Activated CD8-positive, alpha-beta T cell treated with anti-CD3 and anti-CD28 coated beads for 36 hours (primary cell): ENCODE measurements at regions of chr16 and their contacts with region 1.

Region 1: DNA sequence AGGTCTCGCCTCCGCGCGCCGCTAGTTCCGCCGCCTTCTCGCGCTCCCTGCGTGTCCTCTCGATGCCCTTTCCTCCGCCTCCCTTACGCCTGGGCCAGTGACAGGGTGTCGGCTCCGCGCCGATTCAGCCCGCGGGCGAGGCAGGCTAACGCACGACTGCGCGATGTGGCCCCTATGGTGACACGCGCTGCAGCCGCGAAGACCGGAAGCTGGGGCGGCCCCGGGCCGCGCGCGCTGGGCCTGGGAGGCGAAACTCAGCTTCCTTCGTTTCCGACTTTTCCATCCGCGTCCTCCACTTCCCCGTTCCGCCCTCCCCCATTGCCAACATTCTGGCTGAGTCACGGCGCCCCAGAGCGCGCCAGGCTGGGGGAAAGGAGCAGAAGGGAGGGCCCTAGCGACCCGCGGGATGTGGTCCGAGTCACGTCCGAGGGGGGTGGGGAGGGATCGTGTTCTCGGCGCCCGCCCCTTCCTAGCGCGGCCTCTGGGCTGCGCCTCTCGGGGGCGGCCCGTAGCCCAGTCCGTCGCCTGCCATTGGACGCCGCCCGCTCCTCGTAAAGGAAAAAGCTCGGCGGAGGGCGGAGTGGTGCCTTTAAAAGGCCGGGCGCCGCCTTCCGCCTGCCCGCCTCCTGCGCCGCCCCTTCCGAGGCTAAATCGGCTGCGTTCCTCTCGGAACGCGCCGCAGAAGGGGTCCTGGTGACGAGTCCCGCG is at the start of gene ALDOA:
- DNase-seq: peak; percentile 99
- ATAC-seq: peak; percentile 87
- H3K4me3 Mint-ChIP-seq: peak within 1 kb of the TSS; percentile 91
- H3K27ac Mint-ChIP-seq: peak within 1 kb of the TSS; percentile 100
- H3K4me1 Mint-ChIP-seq: peaks cover 30% of the 10 kb centered on the region
- H3K27me3 Mint-ChIP-seq: no peaks in the 10 kb centered on the region
- CTCF ChIP-seq: no peak
- total RNA-seq, gene ALDOA: 3,042 to 3,081 TPM

Region 2: DNA sequence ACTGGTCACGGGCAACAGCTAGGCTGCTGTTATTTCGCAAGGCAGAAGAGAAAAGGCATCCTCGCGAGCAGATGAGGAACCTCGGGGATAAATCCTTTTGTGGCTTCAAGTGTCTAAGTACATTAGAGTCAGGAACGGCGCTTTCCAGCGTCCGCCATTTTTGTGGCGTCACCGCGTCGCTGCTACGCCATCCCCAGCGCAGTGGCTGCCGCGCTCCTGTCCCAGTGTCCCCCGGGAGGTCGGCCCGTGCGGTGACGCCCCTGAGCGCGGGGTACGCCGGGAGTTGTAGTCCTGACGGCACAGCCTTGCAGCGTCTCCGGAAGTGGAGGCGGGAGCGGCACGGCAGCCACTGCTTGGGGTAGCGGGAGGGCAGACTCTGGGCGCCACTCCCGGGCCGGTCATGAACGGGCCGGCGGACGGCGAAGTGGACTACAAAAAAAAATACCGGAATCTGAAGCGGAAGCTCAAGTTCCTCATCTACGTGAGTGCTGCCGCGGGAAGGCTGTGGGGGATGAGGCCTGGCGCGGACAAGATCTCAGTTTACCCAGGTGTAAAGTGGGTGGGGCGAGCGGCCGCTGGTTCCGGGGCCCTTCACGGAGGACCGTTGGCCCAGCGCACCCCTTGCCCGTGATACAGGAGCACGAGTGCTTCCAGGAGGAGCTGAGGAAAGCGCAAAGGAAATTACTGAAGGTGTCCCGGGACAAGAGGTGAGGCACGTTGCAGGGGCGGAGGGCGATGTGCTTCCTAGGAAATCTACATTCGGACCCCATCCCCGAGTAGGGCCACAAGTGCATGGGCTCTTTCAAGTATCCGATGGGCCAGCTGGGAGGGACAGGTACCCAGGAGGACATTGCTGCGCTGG is 69.2 kb before region 1 on chr16 and contains the start of gene INO80E:
- CTCF ChIA-PET with region 1: no interaction called
- POLR2A ChIA-PET with region 1: interaction called, 14 read pairs
- intact Hi-C with region 1: no loop called
- DNase-seq: peak; percentile 99
- ATAC-seq: peak; percentile 97
- H3K4me3 Mint-ChIP-seq: peak within 1 kb of the TSS; percentile 96
- H3K27ac Mint-ChIP-seq: peak within 1 kb of the TSS; percentile 99
- H3K4me1 Mint-ChIP-seq: peaks cover 29% of the 10 kb centered on the region
- H3K27me3 Mint-ChIP-seq: no peaks in the 10 kb centered on the region
- CTCF ChIP-seq: no peak
- total RNA-seq, gene INO80E: 75.9 to 79.1 TPM

Region 3: DNA sequence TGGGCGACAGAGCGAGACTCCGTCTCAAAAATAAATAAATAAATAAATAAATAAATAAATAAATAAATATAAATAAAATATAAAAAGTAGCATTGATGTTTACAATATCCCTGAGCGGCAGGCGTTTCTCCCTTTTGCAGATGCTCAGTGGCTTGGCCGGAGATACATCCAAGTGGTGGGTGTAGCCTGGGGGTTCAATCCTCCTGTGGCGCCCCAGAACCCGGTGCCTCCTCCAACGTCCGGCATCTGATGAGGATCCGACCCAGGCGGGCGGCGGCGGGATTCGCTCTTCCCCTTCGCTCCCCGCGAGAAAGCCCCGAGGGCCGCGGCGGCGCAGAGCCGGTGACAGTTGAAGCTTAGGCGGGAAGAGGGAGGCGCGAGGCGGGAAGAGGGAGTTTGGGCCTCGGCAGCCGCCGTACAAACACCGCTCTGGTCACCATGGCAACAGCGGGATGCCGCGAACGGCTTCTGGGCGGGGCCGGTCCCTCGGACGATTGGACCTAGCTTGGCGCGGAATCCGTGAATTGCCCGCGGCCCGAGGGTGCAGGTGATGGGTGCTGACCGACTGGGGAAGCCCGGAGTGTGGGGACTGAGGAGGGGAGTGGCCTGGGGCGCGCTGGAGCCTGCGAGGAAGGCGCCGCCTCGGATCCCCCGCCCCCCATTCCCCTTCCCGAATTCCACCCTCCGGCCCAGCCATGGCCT is 12.5 kb before region 1 on chr16:
- CTCF ChIA-PET with region 1: interaction called, 14 read pairs
- POLR2A ChIA-PET with region 1: interaction called, 44 read pairs
- intact Hi-C with region 1: no loop called
- DNase-seq: peak; percentile 94
- ATAC-seq: peak; percentile 82
- H3K4me3 Mint-ChIP-seq: peak overlapping the region; percentile 80
- H3K27ac Mint-ChIP-seq: peak overlapping the region; percentile 57
- H3K4me1 Mint-ChIP-seq: peaks cover 16% of the 10 kb centered on the region
- H3K27me3 Mint-ChIP-seq: peaks cover 2% of the 10 kb centered on the region
- CTCF ChIP-seq: no peak

Region 4: DNA sequence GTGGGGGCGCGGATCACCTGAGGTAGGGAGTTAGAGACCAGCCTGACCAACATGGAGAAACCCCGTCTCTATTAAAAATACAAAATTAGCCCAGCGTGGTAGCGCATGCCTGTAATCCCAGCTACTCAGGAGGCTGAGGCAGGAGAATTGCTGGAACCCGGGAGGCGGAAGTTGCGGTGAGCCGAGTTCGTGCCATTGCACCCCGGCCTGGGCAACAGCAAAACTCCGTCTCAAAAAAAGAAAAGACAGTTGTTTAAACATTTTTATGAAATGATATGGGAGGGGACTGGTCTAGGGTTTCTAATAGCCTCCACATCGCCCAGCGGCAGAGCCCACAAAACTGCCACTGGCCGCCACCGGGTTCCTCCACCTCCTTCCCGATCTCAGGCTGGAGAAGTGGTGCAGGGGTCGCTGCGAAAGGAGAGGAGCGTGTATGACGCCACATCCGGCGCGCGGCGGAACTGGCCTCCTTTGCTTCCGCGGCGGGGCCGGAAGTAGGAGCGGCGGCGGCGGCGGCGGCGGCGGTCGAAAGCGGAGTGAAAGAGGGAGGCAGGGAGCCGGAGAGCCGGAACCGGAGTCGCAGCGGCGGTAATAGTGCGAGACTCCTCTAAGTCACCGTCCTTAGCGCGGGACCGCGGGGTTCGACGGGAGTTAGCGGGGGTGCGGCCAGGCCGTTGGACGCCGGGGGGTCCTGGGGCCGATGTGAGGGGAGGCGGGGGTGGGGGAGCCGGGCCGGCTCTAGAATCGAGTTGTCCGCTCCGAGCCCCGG is 10.4 kb after region 1 on chr16 and contains the start of gene PPP4C:
- CTCF ChIA-PET with region 1: interaction called, 5 read pairs
- POLR2A ChIA-PET with region 1: interaction called, 83 read pairs
- intact Hi-C with region 1: no loop called
- DNase-seq: peak; percentile 95
- ATAC-seq: peak; percentile 88
- H3K4me3 Mint-ChIP-seq: peak within 1 kb of the TSS; percentile 92
- H3K27ac Mint-ChIP-seq: peak within 1 kb of the TSS; percentile 94
- H3K4me1 Mint-ChIP-seq: peaks cover 35% of the 10 kb centered on the region
- H3K27me3 Mint-ChIP-seq: no peaks in the 10 kb centered on the region
- CTCF ChIP-seq: no peak
- total RNA-seq, gene PPP4C: 116 to 121 TPM

Region 5: DNA sequence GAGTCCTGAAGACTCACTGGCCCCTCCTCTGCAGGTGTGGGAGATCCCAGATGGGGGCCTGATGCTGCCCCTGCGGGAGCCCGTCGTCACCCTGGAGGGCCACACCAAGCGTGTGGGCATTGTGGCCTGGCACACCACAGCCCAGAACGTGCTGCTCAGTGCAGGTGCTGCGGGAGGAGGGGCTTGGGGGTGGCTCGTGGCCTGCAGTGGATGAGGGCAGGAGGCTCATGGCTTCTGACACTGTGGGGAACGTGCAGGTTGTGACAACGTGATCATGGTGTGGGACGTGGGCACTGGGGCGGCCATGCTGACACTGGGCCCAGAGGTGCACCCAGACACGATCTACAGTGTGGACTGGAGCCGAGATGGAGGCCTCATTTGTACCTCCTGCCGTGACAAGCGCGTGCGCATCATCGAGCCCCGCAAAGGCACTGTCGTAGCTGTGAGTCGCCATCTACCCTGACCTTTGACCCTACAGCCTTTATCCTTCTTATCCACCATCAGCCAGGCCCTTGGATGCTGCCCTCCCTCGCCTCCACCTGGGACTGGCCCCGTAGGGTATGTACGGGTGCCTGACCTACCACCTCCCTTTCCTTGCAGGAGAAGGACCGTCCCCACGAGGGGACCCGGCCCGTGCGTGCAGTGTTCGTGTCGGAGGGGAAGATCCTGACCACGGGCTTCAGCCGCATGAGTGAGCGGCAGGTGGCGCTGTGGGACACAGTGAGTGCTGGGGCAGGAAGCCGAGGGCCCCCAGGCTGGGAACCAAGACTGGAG is 121.7 kb after region 1 on chr16:
- CTCF ChIA-PET with region 1: no interaction called
- POLR2A ChIA-PET with region 1: interaction called, 24 read pairs
- intact Hi-C with region 1: no loop called
- DNase-seq: peak; percentile 95
- ATAC-seq: peak; percentile 10
- H3K4me3 Mint-ChIP-seq: peak overlapping the region; percentile 100
- H3K27ac Mint-ChIP-seq: peak overlapping the region; percentile 100
- H3K4me1 Mint-ChIP-seq: peaks cover 20% of the 10 kb centered on the region
- H3K27me3 Mint-ChIP-seq: no peaks in the 10 kb centered on the region
- CTCF ChIP-seq: peak; percentile 97

Region 6: DNA sequence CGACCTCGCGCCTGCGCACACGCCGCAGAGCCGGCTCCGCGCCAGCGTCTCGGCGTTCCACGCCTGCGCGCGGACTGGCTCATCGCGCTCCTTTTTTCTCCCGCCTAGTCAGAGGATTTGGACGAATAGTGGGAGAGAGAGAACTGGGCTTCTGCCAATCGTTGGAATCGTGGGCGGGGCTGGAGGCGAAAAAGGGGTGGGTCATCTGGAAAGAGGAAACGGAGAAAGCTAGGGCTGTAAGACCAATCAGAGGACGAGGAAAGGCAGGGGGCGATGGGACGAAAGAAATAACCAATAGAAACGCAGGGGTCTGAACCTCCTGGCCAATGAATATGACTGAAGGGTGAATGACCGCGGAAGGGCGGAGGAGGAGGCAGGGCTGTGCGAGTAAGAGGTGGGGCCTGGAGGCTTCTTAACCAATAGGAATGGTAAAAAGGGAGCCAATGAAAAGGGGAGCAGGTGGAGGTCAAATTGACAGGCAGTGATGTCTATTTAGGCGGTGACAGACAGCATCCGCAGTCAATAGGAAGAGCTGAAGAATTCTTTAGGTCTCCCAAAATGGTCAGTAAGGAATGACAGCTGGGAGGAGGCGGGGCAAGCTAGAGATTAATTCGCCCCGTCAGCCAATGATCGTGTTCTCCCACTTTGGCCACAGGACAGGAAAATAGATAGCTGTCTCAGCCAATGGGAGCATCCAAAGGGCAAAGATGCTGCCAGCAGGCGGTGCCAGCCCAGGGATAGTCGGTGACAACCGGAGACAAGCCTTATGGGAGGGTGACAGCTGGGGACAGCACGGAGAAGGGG is 305.3 kb after region 1 on chr16 and contains the start of gene TBC1D10B:
- CTCF ChIA-PET with region 1: no interaction called
- POLR2A ChIA-PET with region 1: interaction called, 3 read pairs
- intact Hi-C with region 1: loop called (anchors 10 kb)
- DNase-seq: peak; percentile 99
- ATAC-seq: peak; percentile 87
- H3K4me3 Mint-ChIP-seq: peak within 1 kb of the TSS; percentile 95
- H3K27ac Mint-ChIP-seq: peak within 1 kb of the TSS; percentile 92
- H3K4me1 Mint-ChIP-seq: peaks cover 35% of the 10 kb centered on the region
- H3K27me3 Mint-ChIP-seq: no peaks in the 10 kb centered on the region
- CTCF ChIP-seq: no peak
- total RNA-seq, gene TBC1D10B: 39.7 to 41.3 TPM